ENCODE measurements at regions of chr19 and their contacts with region 1.

Region 1: GRCh38 chr19:49451430-49452181 is at the start of gene PIH1D1:
- DNase-seq: peak; percentile 98
- ATAC-seq: peak; percentile 57
- H3K4me3 ChIP-seq: peak within 1 kb of the TSS; percentile 87 to 100 (median 99)
- H3K4me3 Mint-ChIP-seq: peak within 1 kb of the TSS; percentile 99
- H3K27ac ChIP-seq: peak within 1 kb of the TSS; percentile 99
- H3K27ac Mint-ChIP-seq: peak within 1 kb of the TSS; percentile 100
- H3K4me1 ChIP-seq: peaks cover 23 to 36% of the 10 kb centered on the region in 2 donors
- H3K4me1 Mint-ChIP-seq: peaks cover 46% of the 10 kb centered on the region
- H3K27me3 ChIP-seq: no peaks in the 10 kb centered on the region
- H3K27me3 Mint-ChIP-seq: no peaks in the 10 kb centered on the region
- CTCF ChIP-seq: no peak
- total RNA-seq, gene PIH1D1: 168 and 184 TPM in 2 replicates

Region 2: DNA sequence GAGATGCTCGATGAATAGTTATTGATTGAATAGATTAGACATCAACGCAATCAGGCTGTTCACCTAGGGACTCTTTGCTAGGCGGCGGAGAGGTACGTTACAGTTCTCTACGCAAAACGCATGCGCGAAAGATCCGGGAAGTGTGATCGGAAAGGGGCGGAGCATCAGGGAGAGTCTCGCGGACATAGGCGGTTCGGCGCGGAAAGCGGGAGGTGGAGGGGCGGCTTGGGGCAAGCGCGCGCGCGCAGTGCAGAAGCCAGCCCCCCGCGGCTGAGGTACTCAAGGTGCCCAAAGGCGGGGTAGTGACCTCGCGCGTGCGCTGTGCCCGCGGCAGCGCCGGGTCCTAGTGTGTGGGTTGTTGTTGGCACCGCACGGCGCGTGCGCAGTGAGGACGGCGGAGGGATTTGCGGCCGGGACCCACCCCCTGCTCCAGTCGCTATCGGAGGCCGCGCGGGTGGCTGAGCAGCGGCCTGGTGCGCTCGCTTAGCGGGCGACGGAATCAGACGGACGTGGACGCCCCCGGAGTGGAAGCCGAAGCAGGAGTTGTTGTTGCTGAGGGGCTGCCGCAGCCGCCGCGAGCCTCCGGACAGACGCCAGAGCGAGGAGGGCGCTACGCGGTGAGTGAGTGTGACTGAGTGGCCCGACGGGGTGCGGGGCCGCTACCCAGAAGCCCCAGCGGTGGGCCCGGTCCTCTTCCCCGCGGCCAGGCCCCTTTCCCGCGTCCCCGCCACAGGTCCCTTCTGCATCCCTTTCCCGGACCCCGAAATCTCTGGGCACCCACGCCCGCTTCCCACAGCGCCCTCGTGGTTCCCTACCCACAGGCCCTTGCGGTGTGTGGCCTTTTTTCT is 366.4 kb before region 1 on chr19 and contains the start of gene SNRNP70:
- CTCF ChIA-PET with region 1: no interaction called
- POLR2A ChIA-PET with region 1: no interaction called
- intact Hi-C with region 1: loop called (anchors 1 kb)
- DNase-seq: peak; percentile 100
- ATAC-seq: peak; percentile 95
- H3K4me3 ChIP-seq: peak within 1 kb of the TSS; percentile 74 to 89 (median 82)
- H3K4me3 Mint-ChIP-seq: peak within 1 kb of the TSS; percentile 93
- H3K27ac ChIP-seq: peak within 1 kb of the TSS; percentile 66 to 90
- H3K27ac Mint-ChIP-seq: peak within 1 kb of the TSS; percentile 87
- H3K4me1 ChIP-seq: peaks cover 20 to 28% of the 10 kb centered on the region in 2 donors
- H3K4me1 Mint-ChIP-seq: peaks cover 33% of the 10 kb centered on the region
- H3K27me3 ChIP-seq: peaks cover 0 to 3% (median 0%) of the 10 kb centered on the region in 4 experiments
- H3K27me3 Mint-ChIP-seq: peaks cover 5% of the 10 kb centered on the region
- CTCF ChIP-seq: no peak
- total RNA-seq, gene SNRNP70: 598 and 610 TPM in 2 replicates

Region 3: GRCh38 chr19:49468746-49469447 is 17.3 kb after region 1 on chr19:
- CTCF ChIA-PET with region 1: interaction called, 44 read pairs
- POLR2A ChIA-PET with region 1: interaction called, 57 read pairs
- intact Hi-C with region 1: loop called (anchors 1 kb)
- DNase-seq: peak; percentile 98
- ATAC-seq: peak; percentile 75
- H3K4me3 ChIP-seq: peak overlapping the region in 1 of 5 experiments; percentile 18
- H3K4me3 Mint-ChIP-seq: peak overlapping the region; percentile 74
- H3K27ac ChIP-seq: peak overlapping the region; percentile 96 to 98
- H3K27ac Mint-ChIP-seq: peak overlapping the region; percentile 98
- H3K4me1 ChIP-seq: peaks cover 44 to 57% of the 10 kb centered on the region in 2 donors
- H3K4me1 Mint-ChIP-seq: peaks cover 41% of the 10 kb centered on the region
- H3K27me3 ChIP-seq: no peaks in the 10 kb centered on the region
- H3K27me3 Mint-ChIP-seq: no peaks in the 10 kb centered on the region
- CTCF ChIP-seq: no peak

Region 4: DNA sequence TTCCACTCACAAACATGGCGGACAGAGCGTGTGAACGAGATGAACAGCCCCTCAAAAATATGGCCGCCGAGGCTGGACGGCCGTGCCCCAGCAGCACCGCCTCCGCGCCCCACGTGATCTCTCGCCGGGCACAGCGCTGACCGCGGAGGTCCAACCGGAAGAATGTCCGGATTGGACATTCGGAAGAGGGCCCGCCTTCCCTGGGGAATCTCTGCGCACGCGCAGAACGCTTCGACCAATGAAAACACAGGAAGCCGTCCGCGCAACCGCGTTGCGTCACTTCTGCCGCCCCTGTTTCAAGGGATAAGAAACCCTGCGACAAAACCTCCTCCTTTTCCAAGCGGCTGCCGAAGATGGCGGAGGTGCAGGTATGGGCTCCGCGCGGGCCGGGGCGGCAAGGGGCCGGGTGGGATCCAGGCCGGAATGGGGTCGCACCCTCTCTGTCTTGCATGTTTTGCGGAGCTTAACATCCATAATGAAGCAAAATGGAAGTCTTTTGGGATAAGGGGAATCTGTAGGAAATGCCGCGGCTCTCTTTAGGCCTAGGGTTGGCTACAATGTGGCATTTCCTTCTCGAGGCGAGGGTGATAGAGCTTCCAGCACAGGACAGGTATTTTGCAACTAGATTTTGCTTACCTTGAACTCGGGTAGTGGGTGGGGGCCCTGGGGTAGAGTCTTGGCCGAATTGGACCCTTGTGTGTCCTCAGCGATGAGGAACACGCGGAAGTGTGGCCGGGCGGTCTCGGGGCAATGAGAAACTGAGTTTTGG is 35.9 kb after region 1 on chr19 and contains the start of gene RPL13A:
- CTCF ChIA-PET with region 1: interaction called, 3 read pairs
- POLR2A ChIA-PET with region 1: interaction called, 7 read pairs
- intact Hi-C with region 1: loop called (anchors 1 kb)
- DNase-seq: peak; percentile 100
- ATAC-seq: peak; percentile 93
- H3K4me3 ChIP-seq: peak within 1 kb of the TSS; percentile 92 to 100 (median 97)
- H3K4me3 Mint-ChIP-seq: peak within 1 kb of the TSS; percentile 99
- H3K27ac ChIP-seq: peak within 1 kb of the TSS; percentile 91 to 97
- H3K27ac Mint-ChIP-seq: peak within 1 kb of the TSS; percentile 97
- H3K4me1 ChIP-seq: peaks cover 17 to 36% of the 10 kb centered on the region in 2 donors
- H3K4me1 Mint-ChIP-seq: peaks cover 42% of the 10 kb centered on the region
- H3K27me3 ChIP-seq: no peaks in the 10 kb centered on the region
- H3K27me3 Mint-ChIP-seq: no peaks in the 10 kb centered on the region
- CTCF ChIP-seq: no peak
- total RNA-seq, gene RPL13A: 5,221 and 5,457 TPM in 2 replicates

Region 5: DNA sequence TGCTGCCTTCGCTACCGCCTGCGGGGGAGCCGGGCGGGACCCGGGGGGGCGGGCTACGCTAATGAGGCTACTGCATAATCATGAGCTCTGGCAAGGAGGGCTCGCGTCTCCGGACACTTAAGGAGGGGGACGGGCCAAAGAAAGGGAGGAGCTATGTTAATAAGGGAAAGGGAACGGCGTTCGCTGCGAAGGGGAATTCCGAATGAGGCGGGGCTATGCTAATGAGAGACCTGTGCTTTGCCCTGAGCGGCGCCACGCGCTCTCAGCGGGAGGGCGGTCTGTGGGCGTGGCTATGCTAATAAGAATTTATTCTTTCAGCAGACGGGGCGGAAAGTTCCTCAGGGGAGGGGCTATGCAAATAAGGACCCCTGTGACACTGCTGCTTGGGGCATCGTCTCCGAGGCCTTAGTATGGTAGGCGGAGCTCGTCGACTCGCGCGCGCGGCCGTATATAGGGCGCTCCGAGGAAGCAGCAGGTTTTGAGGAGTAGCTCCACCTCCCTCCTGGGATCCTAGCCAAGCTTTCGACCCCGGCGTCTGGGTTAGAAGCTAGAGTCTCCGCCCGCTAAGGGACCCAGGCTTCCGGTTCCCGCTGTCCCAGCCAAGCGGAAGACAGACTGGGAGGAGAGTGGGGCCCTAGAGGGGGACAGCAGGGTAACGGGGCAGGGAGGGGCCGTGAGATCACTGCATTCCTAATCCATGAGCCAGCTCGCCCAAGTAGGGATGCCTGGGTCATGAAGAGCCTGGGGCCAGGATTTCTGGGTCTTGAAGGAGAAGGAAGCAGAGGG is 188.7 kb after region 1 on chr19 and contains the start of gene RRAS:
- CTCF ChIA-PET with region 1: no interaction called
- POLR2A ChIA-PET with region 1: interaction called, 4 read pairs
- intact Hi-C with region 1: loop called (anchors 1 kb)
- DNase-seq: peak; percentile 100
- ATAC-seq: peak; percentile 69
- H3K4me3 ChIP-seq: peak within 1 kb of the TSS; percentile 35 to 97 (median 80)
- H3K4me3 Mint-ChIP-seq: peak within 1 kb of the TSS; percentile 95
- H3K27ac ChIP-seq: peak within 1 kb of the TSS; percentile 91 to 96
- H3K27ac Mint-ChIP-seq: peak within 1 kb of the TSS; percentile 95
- H3K4me1 ChIP-seq: peaks cover 37 to 55% of the 10 kb centered on the region in 2 donors
- H3K4me1 Mint-ChIP-seq: peaks cover 53% of the 10 kb centered on the region
- H3K27me3 ChIP-seq: no peaks in the 10 kb centered on the region
- H3K27me3 Mint-ChIP-seq: no peaks in the 10 kb centered on the region
- CTCF ChIP-seq: no peak
- total RNA-seq, gene RRAS: 5.6 and 6.3 TPM in 2 replicates